ENCODE measurements at regions of chr1 and their contacts with region 1.

Region 1: GRCh38 chr1:208184088-208184911 is 59.9 kb downstream of the PLXNA2 start:
- DNase-seq: peak; percentile 99
- H3K4me3 ChIP-seq: no peak overlapping the region
- H3K27ac ChIP-seq: peak overlapping the region; percentile 57
- H3K4me1 ChIP-seq: peaks cover 37% of the 10 kb centered on the region
- H3K27me3 ChIP-seq: no peaks in the 10 kb centered on the region
- CTCF ChIP-seq: no peak

Region 2: GRCh38 chr1:207755846-207756692 is 428.2 kb before region 1 on chr1:
- CTCF ChIA-PET with region 1: no interaction called
- dilution Hi-C with region 1: no loop called
- in situ Hi-C with region 1: no loop called
- intact Hi-C with region 1: no loop called
- DNase-seq: peak; percentile 56
- H3K4me3 ChIP-seq: no peak overlapping the region
- H3K27ac ChIP-seq: no peak overlapping the region
- H3K4me1 ChIP-seq: peaks cover 32% of the 10 kb centered on the region
- H3K27me3 ChIP-seq: no peaks in the 10 kb centered on the region
- CTCF ChIP-seq: no peak

Region 3: GRCh38 chr1:208219659-208220282 is 35.5 kb after region 1 on chr1:
- CTCF ChIA-PET with region 1: no interaction called
- dilution Hi-C with region 1: no loop called
- in situ Hi-C with region 1: no loop called
- intact Hi-C with region 1: loop called (anchors 1 kb)
- DNase-seq: peak; percentile 92
- H3K4me3 ChIP-seq: peak overlapping the region in 1 of 3 experiments; percentile 14
- H3K27ac ChIP-seq: peak overlapping the region; percentile 82
- H3K4me1 ChIP-seq: peaks cover 66% of the 10 kb centered on the region
- H3K27me3 ChIP-seq: no peaks in the 10 kb centered on the region
- CTCF ChIP-seq: no peak